ENCODE measurements at regions of chr3 and their contacts with region 1.

Region 1: GRCh38 chr3:49469936-49470713 is at the start of gene DAG1:
- DNase-seq: peak; percentile 90 to 98 (median 95)
- ATAC-seq: peak; percentile 91
- H3K4me3 ChIP-seq: peak within 1 kb of the TSS; percentile 92
- H3K4me3 Mint-ChIP-seq: peak within 1 kb of the TSS; percentile 87 to 97 (median 92)
- H3K27ac ChIP-seq: peak within 1 kb of the TSS; percentile 94
- H3K27ac Mint-ChIP-seq: peak within 1 kb of the TSS; percentile 89 to 95 (median 93)
- H3K4me1 ChIP-seq: peaks cover 15 to 20% of the 10 kb centered on the region in 2 donors
- H3K4me1 Mint-ChIP-seq: peaks cover 14 to 27% (median 22%) of the 10 kb centered on the region in 7 donors
- H3K27me3 ChIP-seq: no peaks in the 10 kb centered on the region
- H3K27me3 Mint-ChIP-seq: no peaks in the 10 kb centered on the region
- total RNA-seq, gene DAG1: 12.0 to 22.3 (median 20.1) TPM

Region 2: DNA sequence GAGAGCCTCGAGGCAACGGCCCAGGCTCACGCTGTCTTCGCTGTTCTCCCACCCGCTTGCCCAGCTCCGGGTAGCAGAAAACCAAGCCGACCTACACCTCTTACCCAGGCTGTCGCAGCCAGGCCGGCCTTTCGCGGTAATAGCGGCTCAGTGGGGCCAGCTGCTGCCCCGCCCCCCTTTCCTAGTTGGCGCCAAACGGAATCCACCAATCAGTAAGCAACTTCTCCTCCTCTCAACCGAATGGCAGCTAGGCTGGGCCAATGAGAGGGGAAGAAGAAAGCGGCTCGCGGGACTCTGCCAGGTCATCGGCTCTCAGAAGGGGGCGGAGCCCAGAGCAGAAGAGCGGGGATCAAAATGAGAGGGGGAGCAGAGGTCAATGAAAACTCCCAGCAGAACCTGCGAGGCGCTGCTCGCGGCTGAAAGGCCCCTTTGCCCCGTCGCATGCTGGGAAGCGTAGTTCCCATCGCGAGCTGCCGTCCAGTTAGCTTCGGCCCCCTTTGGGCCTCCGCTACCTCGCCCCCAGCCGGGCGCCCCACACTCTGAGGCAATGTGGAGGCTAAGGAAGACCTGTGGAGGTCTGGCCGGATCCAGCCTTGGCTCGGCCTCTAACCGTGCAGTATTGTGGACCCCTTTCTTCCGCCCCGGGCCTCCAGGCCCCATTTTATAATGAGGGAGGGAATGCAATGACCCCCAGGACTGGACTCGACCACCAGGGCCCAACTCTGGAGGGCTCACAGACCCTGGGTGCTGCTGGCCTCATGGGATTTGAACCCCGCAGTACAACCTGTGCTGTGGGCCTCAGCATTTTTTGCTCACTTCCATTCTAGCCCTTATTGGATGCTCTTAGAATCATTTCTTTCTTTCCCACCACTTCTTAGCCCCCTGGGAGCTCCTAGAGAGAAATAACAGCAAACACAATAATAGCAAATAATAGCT is 1281.6 kb before region 1 on chr3 and contains the start of gene CDC25A:
- CTCF ChIA-PET with region 1: no interaction called
- POLR2A ChIA-PET with region 1: no interaction called
- intact Hi-C with region 1: loop called in 1 of 2 experiments (anchors 5 kb)
- DNase-seq: peak; percentile 69 to 94 (median 87)
- ATAC-seq: peak; percentile 100
- H3K4me3 ChIP-seq: peak within 1 kb of the TSS; percentile 88
- H3K4me3 Mint-ChIP-seq: peak within 1 kb of the TSS; percentile 89 to 96 (median 94)
- H3K27ac ChIP-seq: peak within 1 kb of the TSS; percentile 57
- H3K27ac Mint-ChIP-seq: peak within 1 kb of the TSS in 8 of 9 donors; percentile 8 to 84 (median 66)
- H3K4me1 ChIP-seq: peaks cover 4 to 6% of the 10 kb centered on the region in 2 donors
- H3K4me1 Mint-ChIP-seq: peaks cover 6 to 36% (median 13%) of the 10 kb centered on the region in 7 donors
- H3K27me3 ChIP-seq: no peaks in the 10 kb centered on the region
- H3K27me3 Mint-ChIP-seq: peaks cover 0 to 21% (median 14%) of the 10 kb centered on the region in 5 donors
- total RNA-seq, gene CDC25A: 0.61 to 20.7 TPM in 2 of 5 experiments, not detected in the others

Region 3: DNA sequence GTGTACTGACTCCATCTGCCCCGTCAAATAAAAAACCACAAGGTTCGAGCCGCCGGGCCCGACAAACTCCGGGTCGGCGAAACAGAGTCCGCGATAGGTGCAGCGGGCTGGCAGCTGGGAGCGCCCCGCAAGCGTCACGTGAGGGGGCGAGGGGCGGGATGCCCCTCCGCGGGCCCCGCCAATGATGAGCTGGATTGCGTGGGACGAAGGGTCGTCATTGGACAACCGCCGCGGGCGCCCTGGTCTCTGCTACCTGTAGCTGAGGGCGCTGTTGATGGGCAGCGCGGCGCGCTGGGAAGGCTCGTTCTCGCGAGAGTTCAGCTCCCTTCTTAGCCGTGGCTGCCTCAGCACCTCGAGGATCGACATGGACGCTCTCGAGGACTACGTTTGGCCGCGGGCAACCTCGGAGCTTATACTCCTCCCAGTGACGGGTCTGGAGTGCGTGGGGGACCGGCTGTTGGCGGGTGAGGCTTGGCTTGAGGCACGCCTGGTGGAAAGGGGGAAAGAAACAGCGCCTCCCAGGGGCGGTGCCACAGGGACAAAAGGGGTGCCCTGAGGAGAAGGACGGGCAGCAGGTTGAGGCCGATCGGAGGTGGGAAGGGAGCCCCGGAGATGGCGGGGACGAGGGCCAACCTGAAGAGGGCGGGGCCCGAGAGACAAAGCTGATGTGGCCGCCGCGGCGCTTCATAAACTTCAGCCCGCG is 462.9 kb before region 1 on chr3 and contains the start of gene WDR6:
- CTCF ChIA-PET with region 1: interaction called, 3 read pairs
- POLR2A ChIA-PET with region 1: interaction called, 5 read pairs
- intact Hi-C with region 1: loop called (anchors 1 kb)
- DNase-seq: peak; percentile 86 to 98 (median 96)
- ATAC-seq: peak; percentile 95
- H3K4me3 ChIP-seq: peak within 1 kb of the TSS; percentile 96
- H3K4me3 Mint-ChIP-seq: peak within 1 kb of the TSS; percentile 94 to 100 (median 98)
- H3K27ac ChIP-seq: peak within 1 kb of the TSS; percentile 90
- H3K27ac Mint-ChIP-seq: peak within 1 kb of the TSS; percentile 95 to 100 (median 98)
- H3K4me1 ChIP-seq: peaks cover 8 to 16% of the 10 kb centered on the region in 2 donors
- H3K4me1 Mint-ChIP-seq: peaks cover 14 to 34% (median 28%) of the 10 kb centered on the region in 7 donors
- H3K27me3 ChIP-seq: no peaks in the 10 kb centered on the region
- H3K27me3 Mint-ChIP-seq: no peaks in the 10 kb centered on the region
- total RNA-seq, gene WDR6: 170 to 335 (median 204) TPM

Region 4: DNA sequence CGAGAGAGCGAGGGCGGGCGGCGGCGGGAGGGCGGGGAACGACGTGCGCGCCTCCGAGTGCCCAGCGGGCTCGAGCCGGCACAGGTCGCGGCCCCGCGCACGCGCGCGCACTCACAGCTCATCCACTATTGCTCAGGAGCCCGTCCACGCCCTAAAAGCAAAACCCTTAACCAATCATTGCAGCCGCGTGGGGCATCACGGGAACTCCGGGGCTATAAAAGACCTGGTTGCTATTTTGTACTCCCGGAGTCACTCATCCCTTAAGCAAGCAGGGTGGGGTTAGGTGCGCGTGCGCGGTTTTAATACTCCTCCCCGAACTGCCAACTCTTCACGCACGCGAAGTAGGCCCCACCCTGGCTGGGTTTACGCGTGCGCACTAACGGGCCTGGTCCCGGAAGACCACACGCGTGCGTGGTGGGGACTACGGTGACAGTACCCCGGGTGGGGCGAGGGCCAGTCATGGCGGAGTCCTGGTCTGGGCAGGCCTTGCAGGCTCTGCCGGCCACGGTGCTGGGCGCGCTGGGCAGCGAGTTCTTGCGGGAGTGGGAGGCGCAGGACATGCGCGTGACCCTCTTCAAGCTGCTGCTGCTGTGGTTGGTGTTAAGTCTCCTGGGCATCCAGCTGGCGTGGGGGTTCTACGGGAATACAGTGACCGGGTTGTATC is 58.0 kb before region 1 on chr3 and contains the starts of genes RHOA and TCTA:
- CTCF ChIA-PET with region 1: interaction called, 3 read pairs
- POLR2A ChIA-PET with region 1: interaction called, 15 read pairs
- intact Hi-C with region 1: loop called (anchors 1 kb)
- DNase-seq: peak; percentile 94 to 100 (median 99)
- ATAC-seq: peak; percentile 90
- H3K4me3 ChIP-seq: peak within 1 kb of the TSS; percentile 86
- H3K4me3 Mint-ChIP-seq: peak within 1 kb of the TSS; percentile 82 to 97 (median 94)
- H3K27ac ChIP-seq: peak within 1 kb of the TSS; percentile 96
- H3K27ac Mint-ChIP-seq: peak within 1 kb of the TSS; percentile 88 to 97 (median 95)
- H3K4me1 ChIP-seq: peaks cover 61 to 65% of the 10 kb centered on the region in 2 donors
- H3K4me1 Mint-ChIP-seq: peaks cover 51 to 82% (median 71%) of the 10 kb centered on the region in 7 donors
- H3K27me3 ChIP-seq: no peaks in the 10 kb centered on the region
- H3K27me3 Mint-ChIP-seq: peaks cover 0 to 2% (median 0%) of the 10 kb centered on the region in 5 donors
- total RNA-seq, gene RHOA: 212 to 411 (median 218) TPM
- total RNA-seq, gene TCTA: 24.9 to 34.5 (median 28.5) TPM

Region 5: DNA sequence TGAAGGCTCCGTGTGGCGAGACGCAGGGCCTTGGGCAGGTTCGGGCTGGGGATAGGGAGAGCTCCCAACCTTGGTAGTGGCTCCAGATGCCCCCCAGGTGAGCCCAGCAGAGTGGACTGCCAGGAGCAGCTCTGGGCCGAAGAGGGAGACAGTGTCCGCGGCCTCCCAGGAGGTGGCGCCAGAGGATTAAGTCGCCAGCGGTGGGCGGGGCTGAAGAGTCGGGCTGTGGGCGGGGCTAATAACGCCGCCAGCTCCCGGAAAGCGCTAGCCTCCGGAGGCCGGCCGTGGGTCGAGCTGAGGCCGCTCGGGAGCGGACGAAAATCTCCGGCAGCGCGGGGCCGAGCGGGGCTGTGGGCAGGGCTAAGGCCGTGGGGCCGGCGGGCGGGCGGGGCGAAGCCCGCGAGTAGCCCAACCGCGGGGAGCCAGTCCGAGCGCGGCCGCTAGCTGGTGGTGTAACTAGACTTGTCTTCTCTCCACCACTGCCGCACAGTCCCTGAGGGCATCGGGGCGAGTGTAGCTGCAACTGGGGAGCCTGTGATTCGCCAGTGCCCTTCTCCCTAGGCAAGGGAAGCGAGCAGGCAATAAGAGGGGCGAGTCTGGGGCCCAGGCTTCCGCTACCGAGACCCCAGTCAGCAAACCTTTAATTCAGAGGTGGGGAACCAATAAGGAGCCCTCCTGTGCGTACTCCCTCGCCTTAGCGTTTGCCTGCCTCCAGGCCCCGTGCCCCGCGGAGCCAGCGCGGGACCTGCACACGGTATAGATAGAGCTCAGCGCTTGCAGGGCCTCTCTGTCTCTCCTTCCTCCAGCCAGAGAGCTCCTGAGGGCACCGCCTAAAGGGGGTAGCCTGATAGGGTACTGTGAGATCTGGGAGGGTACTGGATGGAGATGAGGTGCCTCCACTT is 69.8 kb after region 1 on chr3:
- CTCF ChIA-PET with region 1: no interaction called
- POLR2A ChIA-PET with region 1: interaction called, 4 read pairs
- intact Hi-C with region 1: loop called in 1 of 2 experiments (anchors 1 kb)
- DNase-seq: peak; percentile 77 to 97 (median 85)
- ATAC-seq: peak; percentile 99
- H3K4me3 ChIP-seq: peak overlapping the region; percentile 90
- H3K4me3 Mint-ChIP-seq: peak overlapping the region; percentile 75 to 84 (median 80)
- H3K27ac ChIP-seq: peak overlapping the region; percentile 78
- H3K27ac Mint-ChIP-seq: peak overlapping the region in 6 of 9 donors; percentile 14 to 69 (median 33)
- H3K4me1 ChIP-seq: peaks cover 4 to 5% of the 10 kb centered on the region in 2 donors
- H3K4me1 Mint-ChIP-seq: peaks cover 0 to 9% (median 5%) of the 10 kb centered on the region in 7 donors
- H3K27me3 ChIP-seq: no peaks in the 10 kb centered on the region
- H3K27me3 Mint-ChIP-seq: peaks cover 0 to 24% (median 4%) of the 10 kb centered on the region in 5 donors